Panc1 (cell line): ENCODE measurements at regions of chr3 and their contacts with region 1.

Region 1: DNA sequence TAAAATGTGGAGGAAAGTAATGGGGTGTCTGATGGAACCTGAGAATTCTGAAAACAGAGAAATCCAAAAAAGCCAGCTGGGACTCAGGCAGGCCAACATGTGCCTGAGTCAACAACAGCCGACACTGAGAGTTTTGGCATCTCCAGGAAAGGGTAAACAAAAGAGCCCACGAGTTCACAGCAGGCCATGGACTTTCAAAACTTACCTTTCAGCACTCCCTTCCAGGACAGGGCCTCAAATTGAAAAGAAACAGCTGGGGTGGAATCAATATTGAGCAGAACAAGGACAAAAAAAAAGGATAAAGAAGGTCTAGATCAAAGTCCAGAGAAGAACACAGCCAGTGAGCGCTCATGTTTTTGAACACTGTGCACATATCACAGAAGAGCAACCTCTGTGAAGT is 735.4 kb upstream of the GRM7 start:
- DNase-seq: no peak
- ATAC-seq: no peak
- H3K4me3 ChIP-seq: no peak overlapping the region
- H3K27ac ChIP-seq: no peak overlapping the region
- H3K4me1 ChIP-seq: no peaks in the 10 kb centered on the region
- H3K27me3 ChIP-seq: no peaks in the 10 kb centered on the region
- CTCF ChIP-seq: no peak

Region 2: GRCh38 chr3:5787861-5788488 is 337.5 kb before region 1 on chr3:
- CTCF ChIA-PET with region 1: no interaction called
- POLR2A ChIA-PET with region 1: interaction called, 13 read pairs
- in situ Hi-C with region 1: no loop called
- intact Hi-C with region 1: no loop called
- DNase-seq: no peak
- ATAC-seq: no peak
- H3K4me3 ChIP-seq: no peak overlapping the region
- H3K27ac ChIP-seq: no peak overlapping the region
- H3K4me1 ChIP-seq: no peaks in the 10 kb centered on the region
- H3K27me3 ChIP-seq: no peaks in the 10 kb centered on the region
- CTCF ChIP-seq: no peak; the same call in 1 of the 2 replicates

Region 3: GRCh38 chr3:6250167-6250566 is 124.6 kb after region 1 on chr3:
- CTCF ChIA-PET with region 1: no interaction called
- POLR2A ChIA-PET with region 1: no interaction called
- in situ Hi-C with region 1: no loop called
- intact Hi-C with region 1: no loop called
- DNase-seq: no peak
- ATAC-seq: no peak
- H3K4me3 ChIP-seq: no peak overlapping the region
- H3K27ac ChIP-seq: no peak overlapping the region
- H3K4me1 ChIP-seq: no peaks in the 10 kb centered on the region
- H3K27me3 ChIP-seq: no peaks in the 10 kb centered on the region
- CTCF ChIP-seq: no peak